ENCODE measurements at regions of chr21 and their contacts with region 1.

Region 1: GRCh38 chr21:44011980-44012527 is at the start of gene TRAPPC10:
- DNase-seq: peak; percentile 93
- H3K4me3 ChIP-seq: peak within 1 kb of the TSS; percentile 84 to 99 (median 98)
- H3K27ac ChIP-seq: peak within 1 kb of the TSS; percentile 93 to 99 (median 99)
- H3K4me1 ChIP-seq: peaks cover 32 to 52% (median 44%) of the 10 kb centered on the region in 4 donors
- H3K27me3 ChIP-seq: no peaks in the 10 kb centered on the region
- CTCF ChIP-seq: no peak
- EP300 ChIP-seq: no peak
- POLR2A ChIP-seq: peak; percentile 89
- total RNA-seq, gene TRAPPC10: 14.5 to 35.2 (median 20.5) TPM

Region 2: GRCh38 chr21:44299458-44300261 is 287.6 kb after region 1 on chr21 and contains the start of gene PFKL:
- intact Hi-C with region 1: loop called (anchors 5 kb)
- DNase-seq: no peak
- H3K4me3 ChIP-seq: peak within 1 kb of the TSS; percentile 93 to 98 (median 96)
- H3K27ac ChIP-seq: peak within 1 kb of the TSS; percentile 89 to 93 (median 93)
- H3K4me1 ChIP-seq: peaks cover 59 to 81% (median 70%) of the 10 kb centered on the region in 4 donors
- H3K27me3 ChIP-seq: peaks cover 0 to 25% (median 0%) of the 10 kb centered on the region in 4 donors
- CTCF ChIP-seq: no peak
- EP300 ChIP-seq: no peak
- POLR2A ChIP-seq: no peak
- total RNA-seq, gene PFKL: 61.5 to 109 (median 83.4) TPM

Measured in esophagus muscularis mucosa (tissue), 4 donors.